Activated CD8-positive, alpha-beta T cell treated with anti-CD3 and anti-CD28 coated beads for 36 hours (primary cell): ENCODE measurements at regions of chr9 and their contacts with region 1.

Region 1: DNA sequence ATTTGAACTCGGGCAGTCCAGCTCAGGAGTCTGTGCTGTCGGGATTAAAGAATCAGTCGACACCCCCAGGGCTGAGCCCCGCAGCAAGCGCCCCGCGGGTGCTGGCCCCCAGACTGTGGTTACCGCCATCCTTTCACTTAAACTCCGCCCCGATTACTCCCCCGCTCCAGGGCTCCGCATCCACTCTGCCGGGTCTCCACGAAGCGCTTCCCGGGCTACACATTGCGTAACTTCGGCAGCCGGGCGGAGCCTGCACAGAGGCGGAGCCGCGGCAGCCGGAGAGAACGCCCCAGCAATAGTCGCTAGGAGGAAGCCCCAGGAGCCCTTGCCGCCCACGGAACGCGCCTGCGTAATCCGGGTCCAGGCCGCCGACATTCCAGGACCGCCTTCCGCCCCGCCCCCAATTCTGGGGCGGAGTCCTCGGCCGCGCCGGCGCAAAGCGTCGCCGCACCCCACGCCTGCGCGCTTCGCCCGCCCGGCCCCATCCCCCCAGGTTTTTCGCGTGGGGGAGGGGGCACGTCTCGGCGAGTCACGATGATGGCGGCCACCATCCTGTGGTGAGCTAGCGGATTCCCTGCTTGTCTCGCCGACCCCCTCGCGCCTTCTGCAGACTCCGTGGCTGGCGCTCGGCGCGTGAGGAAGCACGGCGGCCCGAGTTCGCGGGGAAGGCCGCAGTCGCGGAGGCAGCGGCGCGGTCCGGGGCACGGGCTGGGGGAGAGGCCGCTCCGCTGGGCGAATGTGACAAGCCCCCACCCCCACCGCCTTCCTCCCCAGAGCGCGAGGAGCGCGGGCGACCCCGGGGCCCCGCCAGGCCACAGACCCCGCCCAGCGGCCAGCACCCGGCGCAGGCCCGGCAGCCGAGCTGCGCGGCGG is at the start of gene RAD23B:
- DNase-seq: peak; percentile 99
- ATAC-seq: peak; percentile 85
- H3K4me3 Mint-ChIP-seq: peak within 1 kb of the TSS; percentile 92
- H3K27ac Mint-ChIP-seq: peak within 1 kb of the TSS; percentile 93
- H3K4me1 Mint-ChIP-seq: peaks cover 41% of the 10 kb centered on the region
- H3K27me3 Mint-ChIP-seq: no peaks in the 10 kb centered on the region
- CTCF ChIP-seq: no peak
- total RNA-seq, gene RAD23B: 115 to 117 TPM

Region 2: GRCh38 chr9:107243751-107244150 is 39.2 kb before region 1 on chr9:
- CTCF ChIA-PET with region 1: no interaction called
- POLR2A ChIA-PET with region 1: interaction called, 5 read pairs
- intact Hi-C with region 1: loop called (anchors 5 kb)
- DNase-seq: peak; percentile 80
- ATAC-seq: peak; percentile 86
- H3K4me3 Mint-ChIP-seq: no peak overlapping the region
- H3K27ac Mint-ChIP-seq: peak overlapping the region; percentile 82
- H3K4me1 Mint-ChIP-seq: peaks cover 40% of the 10 kb centered on the region
- H3K27me3 Mint-ChIP-seq: peaks cover under 1% of the 10 kb centered on the region
- CTCF ChIP-seq: no peak